ENCODE measurements at regions of chr2 and their contacts with region 1.

Region 1: DNA sequence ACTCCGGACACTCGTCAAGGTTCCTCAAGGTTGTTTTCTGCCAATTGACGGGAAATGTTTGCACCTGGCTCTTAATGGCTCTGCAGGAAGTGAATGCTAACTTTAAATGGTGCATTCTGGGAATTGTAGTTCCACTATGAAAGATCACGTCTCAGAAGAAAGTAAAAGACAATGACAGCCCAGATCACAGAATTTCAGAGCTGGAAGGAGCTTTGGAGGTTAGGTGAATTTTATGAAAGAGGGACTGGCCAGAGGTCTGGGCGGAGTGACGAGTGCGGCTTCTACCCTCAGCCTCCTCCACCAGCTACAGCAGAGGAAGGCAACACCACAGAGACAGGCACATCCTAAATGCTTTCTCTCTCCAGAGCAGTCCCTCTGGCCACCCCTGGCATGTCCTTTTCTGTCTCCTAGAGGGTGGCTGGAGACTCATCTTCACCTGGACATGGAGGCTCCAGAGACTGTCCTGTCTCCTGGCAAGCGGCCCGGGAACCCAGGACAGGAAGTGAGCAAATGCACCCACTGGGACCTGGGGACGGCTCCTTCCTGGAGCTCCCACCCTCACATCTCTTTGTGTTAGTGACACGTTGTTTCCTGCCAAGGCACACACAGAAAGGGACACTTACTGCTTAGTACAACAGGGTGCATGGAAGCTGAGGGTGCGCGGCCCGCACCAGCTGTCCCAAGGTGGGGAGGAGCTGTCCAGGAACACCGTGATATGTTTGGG is 19.4 kb downstream of the THAP4 start:
- DNase-seq: peak; percentile 15 to 25 (median 22)
- H3K4me3 ChIP-seq: peak overlapping the region; percentile 33 to 69 (median 41)
- H3K4me3 Mint-ChIP-seq: peak overlapping the region; percentile 71 to 91
- H3K27ac ChIP-seq: peak overlapping the region in 1 of 2 donors; percentile 34
- H3K27ac Mint-ChIP-seq: peak overlapping the region in 6 of 7 donors; percentile 31 to 88 (median 78)
- H3K4me1 ChIP-seq: peaks cover 10 to 11% of the 10 kb centered on the region in 2 donors
- H3K4me1 Mint-ChIP-seq: peaks cover 16% of the 10 kb centered on the region
- H3K27me3 ChIP-seq: no peaks in the 10 kb centered on the region
- H3K27me3 Mint-ChIP-seq: peaks cover 0 to 2% (median 0%) of the 10 kb centered on the region in 3 donors
- CTCF ChIP-seq: no peak

Region 2: DNA sequence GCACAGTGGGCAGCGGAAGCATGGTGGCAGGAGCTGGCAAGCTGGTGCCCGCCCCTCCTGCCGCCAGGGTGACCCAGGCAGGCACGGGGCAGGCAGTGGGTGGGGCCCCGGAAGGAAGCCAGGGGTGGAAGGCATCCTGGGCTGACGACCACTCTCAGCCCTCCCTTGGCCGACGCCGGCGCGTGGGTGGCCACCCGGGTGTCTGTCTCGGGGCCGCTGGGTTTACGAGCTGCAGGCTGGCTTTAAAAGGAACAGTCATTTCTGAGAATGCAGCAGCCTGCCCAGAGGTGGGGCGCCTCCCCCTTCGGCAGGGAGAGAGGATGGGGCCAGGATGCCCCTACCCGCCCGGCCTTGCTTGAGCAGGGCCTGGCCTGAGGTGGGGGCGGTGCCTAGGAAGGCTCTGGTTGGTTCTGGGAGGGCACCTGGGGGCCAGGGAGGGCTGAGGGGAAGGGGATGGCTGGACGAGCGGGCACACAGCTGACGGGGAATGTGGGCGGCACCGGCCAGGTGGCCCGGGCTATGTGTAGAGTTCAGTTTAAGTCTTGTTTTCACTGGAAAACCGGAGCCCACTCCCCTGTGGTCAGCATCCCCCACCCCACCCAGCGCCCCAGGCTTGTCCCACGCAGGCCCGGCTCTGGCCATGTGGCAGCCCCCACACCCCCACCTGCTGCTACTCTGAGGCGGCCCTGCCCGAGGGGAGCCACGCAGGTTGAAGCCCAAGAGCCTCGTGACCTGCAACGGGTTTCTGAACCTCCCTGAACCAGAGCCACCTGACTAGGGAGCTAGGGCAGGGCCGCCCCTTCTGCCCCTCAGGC is 52.8 kb before region 1 on chr2:
- intact Hi-C with region 1: no loop called
- DNase-seq: no peak
- H3K4me3 ChIP-seq: no peak overlapping the region
- H3K4me3 Mint-ChIP-seq: no peak overlapping the region
- H3K27ac ChIP-seq: no peak overlapping the region
- H3K27ac Mint-ChIP-seq: no peak overlapping the region
- H3K4me1 ChIP-seq: no peaks in the 10 kb centered on the region
- H3K4me1 Mint-ChIP-seq: no peaks in the 10 kb centered on the region
- H3K27me3 ChIP-seq: peaks cover 0 to 12% of the 10 kb centered on the region in 2 donors
- H3K27me3 Mint-ChIP-seq: peaks cover 9 to 17% (median 14%) of the 10 kb centered on the region in 3 donors
- CTCF ChIP-seq: no peak

Region 3: DNA sequence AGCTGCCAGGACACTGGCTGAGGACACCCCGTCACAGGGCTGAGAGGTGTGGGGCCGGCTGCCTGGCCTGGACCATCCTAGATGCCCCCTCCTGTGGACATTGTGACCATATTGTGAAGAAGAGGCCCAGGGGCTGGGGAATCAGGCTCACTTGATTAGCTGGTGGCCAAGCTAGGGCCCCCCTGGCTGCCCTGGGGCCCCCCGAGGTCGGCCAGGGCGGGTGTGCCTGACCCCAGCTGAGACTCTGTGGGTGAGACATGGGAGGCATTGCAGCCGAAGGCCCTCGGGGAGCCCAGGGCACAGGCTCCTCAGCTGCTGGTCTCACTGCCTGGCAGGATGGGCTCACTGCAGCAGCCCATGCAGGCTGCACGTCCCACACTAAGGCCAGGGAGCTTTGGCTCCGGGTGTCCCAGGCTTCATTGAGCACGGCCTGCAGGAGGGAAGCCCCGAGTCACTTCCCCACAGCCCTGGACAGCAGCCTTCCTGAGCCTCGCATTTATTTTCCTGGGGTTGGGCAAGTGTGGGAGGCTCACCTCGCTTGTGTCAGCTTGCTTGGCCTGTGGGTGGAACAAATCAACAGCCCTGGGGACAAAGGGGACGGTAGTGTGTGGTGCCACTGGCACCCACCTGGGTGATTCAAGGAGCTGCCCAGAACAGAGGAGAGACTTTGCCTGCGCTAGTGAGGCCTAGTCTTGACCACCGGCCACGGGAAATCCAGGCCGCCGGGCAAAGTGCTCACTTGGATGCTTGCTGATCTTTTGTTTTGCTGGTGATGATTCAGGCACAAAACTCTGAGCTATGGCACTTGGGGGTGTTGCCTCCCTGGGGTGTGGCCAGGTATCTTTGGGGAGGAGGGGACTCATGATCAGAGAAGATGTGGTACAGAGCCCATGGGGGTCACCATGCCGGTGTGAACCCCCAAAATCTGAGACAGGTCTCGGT is 160.4 kb after region 1 on chr2:
- intact Hi-C with region 1: no loop called
- DNase-seq: peak in 1 of 3 donors; percentile 1
- H3K4me3 ChIP-seq: no peak overlapping the region
- H3K4me3 Mint-ChIP-seq: no peak overlapping the region
- H3K27ac ChIP-seq: no peak overlapping the region
- H3K27ac Mint-ChIP-seq: peak overlapping the region in 3 of 7 donors; percentile 24 to 40 (median 34)
- H3K4me1 ChIP-seq: no peaks in the 10 kb centered on the region
- H3K4me1 Mint-ChIP-seq: no peaks in the 10 kb centered on the region
- H3K27me3 ChIP-seq: no peaks in the 10 kb centered on the region
- H3K27me3 Mint-ChIP-seq: peaks cover 7 to 15% (median 12%) of the 10 kb centered on the region in 3 donors
- CTCF ChIP-seq: no peak

Region 4: DNA sequence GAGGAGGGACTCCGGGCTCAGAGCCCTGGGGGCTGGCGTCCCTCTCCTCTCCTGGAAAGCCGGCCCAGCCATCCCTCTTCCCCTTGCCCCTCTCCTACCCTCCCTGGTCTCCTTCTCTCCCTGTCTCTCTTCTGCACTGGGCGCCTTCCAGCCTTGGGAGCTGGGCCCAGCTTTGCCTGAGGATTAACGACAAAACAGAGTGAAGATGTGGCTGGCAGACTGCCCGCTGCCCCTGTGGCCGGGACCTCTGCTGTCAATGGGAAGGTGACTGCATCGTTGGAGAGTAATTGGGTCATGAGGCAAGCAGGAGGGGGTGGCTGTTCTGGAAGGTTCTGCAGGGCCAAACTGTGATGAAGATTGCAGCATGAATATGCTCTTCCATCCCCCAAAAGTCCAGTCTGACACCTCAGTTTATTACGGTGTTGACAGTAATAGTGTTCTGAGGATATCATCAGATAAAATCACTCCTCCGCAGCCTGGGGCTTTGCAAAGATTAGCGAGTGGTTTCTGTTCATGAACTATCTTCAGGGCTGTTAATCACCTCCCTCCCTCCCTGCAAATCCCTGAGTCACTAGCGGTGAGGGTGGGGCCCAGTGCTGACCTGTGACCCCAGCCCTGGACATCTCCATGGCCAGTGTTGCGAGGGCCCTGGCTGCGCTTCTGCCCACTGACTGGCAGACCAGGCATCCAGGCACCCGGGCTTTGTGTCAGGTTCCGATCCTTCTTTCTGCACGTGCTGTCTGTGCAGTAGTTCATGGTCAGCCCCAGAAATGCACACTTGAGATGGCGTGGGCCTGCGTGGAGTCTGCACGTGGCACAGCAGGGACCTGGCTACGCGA is 274.9 kb after region 1 on chr2:
- intact Hi-C with region 1: loop called in 1 of 2 experiments (anchors 5 kb)
- DNase-seq: no peak
- H3K4me3 ChIP-seq: no peak overlapping the region
- H3K4me3 Mint-ChIP-seq: no peak overlapping the region
- H3K27ac ChIP-seq: no peak overlapping the region
- H3K27ac Mint-ChIP-seq: peak overlapping the region in 1 of 7 donors; percentile 76
- H3K4me1 ChIP-seq: no peaks in the 10 kb centered on the region
- H3K4me1 Mint-ChIP-seq: no peaks in the 10 kb centered on the region
- H3K27me3 ChIP-seq: no peaks in the 10 kb centered on the region
- H3K27me3 Mint-ChIP-seq: peaks cover 0 to 2% (median 0%) of the 10 kb centered on the region in 3 donors
- CTCF ChIP-seq: no peak

Measured in CD14-positive monocyte (primary cell).